Heart right ventricle (tissue), 16 donors: ENCODE measurements at regions of chr1 and their contacts with region 1.

Region 1: GRCh38 chr1:203692565-203693470 is 66.2 kb downstream of the ATP2B4 start:
- DNase-seq: peak; percentile 75 to 90
- ATAC-seq: peak; percentile 88 to 95 (median 89)
- H3K4me3 ChIP-seq: peak overlapping the region in 1 of 10 donors; percentile 1
- H3K27ac ChIP-seq: peak overlapping the region; percentile 63 to 85 (median 76)
- H3K4me1 ChIP-seq: peaks cover 33 to 96% (median 65%) of the 10 kb centered on the region in 9 donors
- H3K27me3 ChIP-seq: no peaks in the 10 kb centered on the region
- CTCF ChIP-seq: peak in 2 of 9 donors; percentile 6 to 12

Region 2: GRCh38 chr1:203673550-203674427 is 19.0 kb before region 1 on chr1:
- intact Hi-C with region 1: loop called in 1 of 10 experiments (anchors 2 kb)
- DNase-seq: peak; percentile 50 to 75
- ATAC-seq: peak; percentile 61 to 90 (median 79)
- H3K4me3 ChIP-seq: peak overlapping the region in 4 of 10 donors; percentile 3 to 18 (median 10)
- H3K27ac ChIP-seq: peak overlapping the region; percentile 59 to 90 (median 88)
- H3K4me1 ChIP-seq: peaks cover 31 to 100% (median 87%) of the 10 kb centered on the region in 9 donors
- H3K27me3 ChIP-seq: no peaks in the 10 kb centered on the region
- CTCF ChIP-seq: peak in 5 of 9 donors; percentile 29 to 47 (median 35)